Right ventricle myocardium inferior (tissue), 1 donor: ENCODE measurements at regions of chr15 and their contacts with region 1.

Region 1: GRCh38 chr15:25501828-25502446 is 63.1 kb upstream of the UBE3A start:
- DNase-seq: no peak
- ATAC-seq: no peak

Region 2: DNA sequence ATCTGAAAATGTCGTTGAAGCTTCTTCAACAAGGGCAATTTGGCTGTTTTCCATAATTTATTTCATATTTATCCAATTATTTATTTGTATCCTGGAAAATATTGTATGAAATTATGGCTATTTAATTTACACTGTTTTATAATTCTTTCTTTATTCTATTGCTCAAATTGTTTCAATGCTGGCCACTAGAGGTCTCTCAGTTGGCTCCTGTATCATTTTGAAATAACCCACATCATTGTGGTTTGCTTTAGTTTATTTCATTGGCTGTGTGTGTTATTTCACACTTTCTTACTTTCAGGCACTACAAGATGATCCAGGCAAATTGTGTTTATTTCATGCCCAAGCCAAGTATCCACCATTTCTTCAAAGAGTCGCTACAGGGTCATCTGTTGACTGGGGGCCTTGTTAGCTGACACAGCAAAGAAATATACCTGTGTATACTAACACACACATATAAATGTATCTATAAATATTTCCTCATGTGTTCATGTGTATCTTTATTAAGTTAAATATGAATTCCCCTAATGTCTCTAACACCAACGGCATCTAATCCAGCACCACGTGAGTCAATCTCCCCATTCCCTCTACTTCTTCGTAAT is 740.1 kb before region 1 on chr15:
- intact Hi-C with region 1: loop called (anchors 5 kb)
- DNase-seq: no peak
- ATAC-seq: no peak